ENCODE measurements at regions of chr22 and their contacts with region 1.

Region 1: DNA sequence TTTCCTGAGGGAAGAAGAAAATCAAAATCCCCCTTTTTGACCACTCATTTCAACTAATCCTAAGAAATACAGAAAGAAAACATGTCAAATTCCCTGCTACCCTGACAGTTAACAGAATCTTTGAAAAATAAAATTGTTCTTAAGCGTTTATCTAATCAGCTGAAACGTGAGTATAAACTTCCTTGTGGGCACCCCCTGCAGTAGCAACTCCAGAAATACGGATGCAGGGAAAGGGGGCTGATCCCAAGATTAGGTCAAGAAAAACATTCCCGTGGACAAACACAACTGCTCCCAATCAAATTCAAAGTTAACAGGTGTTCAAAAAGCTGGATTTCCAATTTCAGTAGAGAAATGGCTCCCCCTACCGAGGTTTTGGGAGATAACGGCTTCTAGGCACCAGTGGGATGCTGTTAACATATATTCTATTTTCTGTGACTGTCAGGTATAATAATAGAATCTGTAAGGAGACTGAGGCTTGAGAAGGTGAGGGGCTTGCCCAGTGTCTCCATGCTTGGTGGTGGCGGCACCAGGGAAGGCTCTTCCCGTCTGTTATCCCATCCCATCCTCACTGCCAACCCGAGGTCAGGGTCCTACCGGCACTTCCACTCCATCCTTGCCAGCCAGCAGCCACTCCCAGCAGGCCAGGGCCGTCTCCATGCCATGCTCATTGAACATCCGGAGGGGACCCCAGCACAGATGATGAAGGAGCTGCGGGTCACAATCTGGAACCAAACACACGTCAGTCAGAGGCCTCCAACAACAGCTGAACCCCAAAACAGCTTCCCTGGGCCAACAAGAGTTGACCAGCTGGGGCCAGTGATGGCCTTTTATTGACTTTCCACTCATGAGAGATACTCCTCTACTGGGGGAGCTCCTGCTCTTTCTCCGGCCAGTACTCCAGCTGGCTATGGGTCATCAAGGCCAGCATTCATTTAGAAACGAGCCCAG is 32.0 kb upstream of the SERPIND1 start:
- DNase-seq: peak; percentile 57
- ATAC-seq: no peak
- H3K4me3 ChIP-seq: no peak overlapping the region
- H3K4me3 Mint-ChIP-seq: no peak overlapping the region
- H3K27ac ChIP-seq: no peak overlapping the region
- H3K27ac Mint-ChIP-seq: no peak overlapping the region
- H3K4me1 ChIP-seq: peaks cover 0 to 4% of the 10 kb centered on the region in 2 donors
- H3K4me1 Mint-ChIP-seq: peaks cover 14% of the 10 kb centered on the region
- H3K27me3 ChIP-seq: no peaks in the 10 kb centered on the region
- H3K27me3 Mint-ChIP-seq: no peaks in the 10 kb centered on the region
- CTCF ChIP-seq: peak; percentile 79

Region 2: DNA sequence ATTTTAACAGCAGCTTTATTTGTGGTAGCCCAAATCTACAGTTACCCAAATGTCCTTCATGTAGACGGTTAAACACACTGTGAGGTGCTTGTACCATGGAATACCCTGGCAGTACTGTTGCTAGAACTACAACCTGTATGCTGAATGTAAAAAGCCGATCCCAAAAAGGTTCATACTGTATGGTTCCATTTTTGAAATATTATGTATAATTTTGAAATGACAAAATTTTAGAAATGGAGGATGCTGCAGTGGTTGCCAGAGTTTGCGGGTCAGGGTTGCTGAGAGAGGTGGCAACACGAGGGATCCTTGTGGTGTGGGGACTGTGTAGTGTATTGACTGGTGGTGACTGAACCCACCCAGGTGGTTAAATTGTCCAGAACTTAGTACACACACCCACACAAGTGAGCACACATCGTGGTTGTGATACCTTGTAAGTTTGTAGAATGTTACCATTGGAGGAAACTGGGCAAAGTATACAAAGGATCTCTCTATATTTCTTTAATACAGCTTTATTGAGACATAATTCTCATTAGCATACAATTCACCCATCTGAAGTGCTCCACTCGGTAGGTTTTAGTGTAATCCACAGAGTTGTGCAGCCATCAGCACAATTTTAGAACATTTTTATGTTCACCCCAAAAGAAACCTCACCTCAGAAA is 178.5 kb before region 1 on chr22:
- CTCF ChIA-PET with region 1: interaction called, 26 read pairs
- POLR2A ChIA-PET with region 1: no interaction called
- intact Hi-C with region 1: loop called (anchors 5 kb)
- DNase-seq: no peak
- ATAC-seq: no peak
- H3K4me3 ChIP-seq: no peak overlapping the region
- H3K4me3 Mint-ChIP-seq: no peak overlapping the region
- H3K27ac ChIP-seq: no peak overlapping the region
- H3K27ac Mint-ChIP-seq: no peak overlapping the region
- H3K4me1 ChIP-seq: peaks cover 0 to 3% of the 10 kb centered on the region in 2 donors
- H3K4me1 Mint-ChIP-seq: no peaks in the 10 kb centered on the region
- H3K27me3 ChIP-seq: no peaks in the 10 kb centered on the region
- H3K27me3 Mint-ChIP-seq: no peaks in the 10 kb centered on the region
- CTCF ChIP-seq: no peak

Region 3: DNA sequence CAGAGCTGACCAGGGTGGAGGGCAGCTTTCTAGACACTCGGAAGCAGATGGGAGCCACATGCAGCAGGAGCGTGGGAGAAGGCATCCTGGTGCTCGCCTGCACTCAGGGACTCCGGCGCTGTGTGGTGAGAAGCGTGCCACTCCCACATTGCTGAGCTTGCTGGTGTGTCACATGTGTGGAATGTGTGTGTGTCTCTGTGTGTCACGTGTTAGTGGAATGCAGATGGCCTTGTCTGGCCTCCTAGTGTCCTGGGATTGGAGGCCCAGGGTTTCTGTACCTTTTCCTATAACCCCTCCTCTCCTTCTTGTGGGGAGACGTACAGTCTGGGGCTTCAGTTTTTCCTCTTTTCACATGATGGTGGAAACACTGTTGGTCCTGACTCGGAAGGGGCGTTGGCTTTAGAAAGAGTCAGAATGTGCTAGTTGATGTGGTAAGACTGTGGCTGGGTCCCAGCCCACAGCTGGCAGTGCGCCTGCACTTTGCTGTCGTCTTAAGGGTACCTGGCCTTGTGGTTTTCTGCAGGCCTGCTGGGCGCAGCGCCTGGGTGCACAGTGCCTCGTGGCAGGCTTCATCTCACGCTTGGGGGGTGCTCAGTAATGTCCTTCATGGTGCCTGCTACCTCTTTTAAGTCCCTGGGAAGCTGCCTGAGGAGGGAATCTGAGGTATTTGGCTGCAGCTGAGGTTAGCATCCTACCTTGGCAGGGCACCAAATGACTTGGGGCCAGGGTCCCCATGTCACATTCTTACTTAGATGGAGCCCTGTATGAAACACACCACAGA is 172.7 kb before region 1 on chr22:
- CTCF ChIA-PET with region 1: interaction called, 26 read pairs
- POLR2A ChIA-PET with region 1: no interaction called
- intact Hi-C with region 1: loop called (anchors 5 kb)
- DNase-seq: peak; percentile 56
- ATAC-seq: peak; percentile 62
- H3K4me3 ChIP-seq: no peak overlapping the region
- H3K4me3 Mint-ChIP-seq: no peak overlapping the region
- H3K27ac ChIP-seq: peak overlapping the region in 1 of 2 donors; percentile 9
- H3K27ac Mint-ChIP-seq: peak overlapping the region; percentile 59
- H3K4me1 ChIP-seq: peaks cover 0 to 16% of the 10 kb centered on the region in 2 donors
- H3K4me1 Mint-ChIP-seq: peaks cover 6% of the 10 kb centered on the region
- H3K27me3 ChIP-seq: no peaks in the 10 kb centered on the region
- H3K27me3 Mint-ChIP-seq: no peaks in the 10 kb centered on the region
- CTCF ChIP-seq: no peak

Region 4: DNA sequence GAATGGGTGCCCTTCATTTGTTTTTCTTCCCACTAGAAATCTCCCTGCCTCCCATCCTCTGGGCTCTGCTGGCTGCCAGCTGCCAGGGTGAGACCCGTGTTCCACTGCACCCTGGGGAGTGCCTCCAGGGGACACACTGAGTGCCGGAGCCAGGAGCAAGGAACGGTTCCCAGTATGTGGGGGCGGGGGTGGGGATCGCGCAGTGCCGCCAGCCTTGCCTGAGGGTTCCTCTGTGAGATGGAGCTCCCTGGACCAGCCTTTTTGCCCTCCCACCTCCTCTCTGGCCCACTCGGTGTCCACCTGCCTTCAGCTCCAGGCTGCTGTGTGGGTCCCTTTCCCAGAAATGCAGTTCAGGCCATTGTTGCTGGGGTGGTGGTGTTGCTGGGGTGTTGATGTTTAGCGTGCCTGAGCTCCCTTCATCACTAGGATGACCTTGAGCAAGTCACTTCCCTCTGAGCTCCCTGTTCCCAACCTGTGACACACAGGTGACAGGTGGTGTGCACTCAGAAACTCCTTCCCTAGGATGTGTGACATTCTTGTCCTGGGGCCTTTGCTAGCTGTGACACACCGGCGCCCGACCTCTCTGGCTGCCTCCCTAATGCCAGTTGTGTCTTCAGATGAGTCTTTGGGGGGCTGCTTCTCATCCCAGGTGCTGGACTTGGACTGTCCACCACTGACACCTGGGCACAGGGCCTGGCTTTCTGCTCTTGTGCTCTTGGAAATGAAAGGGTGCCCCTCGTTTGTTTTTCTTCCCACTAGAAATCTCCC is 162.4 kb before region 1 on chr22:
- CTCF ChIA-PET with region 1: no interaction called
- POLR2A ChIA-PET with region 1: no interaction called
- intact Hi-C with region 1: no loop called
- DNase-seq: no peak
- ATAC-seq: no peak
- H3K4me3 ChIP-seq: no peak overlapping the region
- H3K4me3 Mint-ChIP-seq: no peak overlapping the region
- H3K27ac ChIP-seq: no peak overlapping the region
- H3K27ac Mint-ChIP-seq: no peak overlapping the region
- H3K4me1 ChIP-seq: no peaks in the 10 kb centered on the region
- H3K4me1 Mint-ChIP-seq: no peaks in the 10 kb centered on the region
- H3K27me3 ChIP-seq: no peaks in the 10 kb centered on the region
- H3K27me3 Mint-ChIP-seq: no peaks in the 10 kb centered on the region
- CTCF ChIP-seq: no peak

Region 5: GRCh38 chr22:20606041-20606783 is 135.7 kb before region 1 on chr22:
- CTCF ChIA-PET with region 1: interaction called, 20 read pairs
- POLR2A ChIA-PET with region 1: no interaction called
- intact Hi-C with region 1: no loop called
- DNase-seq: peak; percentile 73
- ATAC-seq: peak; percentile 63
- H3K4me3 ChIP-seq: no peak overlapping the region
- H3K4me3 Mint-ChIP-seq: no peak overlapping the region
- H3K27ac ChIP-seq: no peak overlapping the region
- H3K27ac Mint-ChIP-seq: no peak overlapping the region
- H3K4me1 ChIP-seq: peaks cover 0 to 4% of the 10 kb centered on the region in 2 donors
- H3K4me1 Mint-ChIP-seq: peaks cover 2% of the 10 kb centered on the region
- H3K27me3 ChIP-seq: no peaks in the 10 kb centered on the region
- H3K27me3 Mint-ChIP-seq: peaks cover 5% of the 10 kb centered on the region
- CTCF ChIP-seq: peak; percentile 72

Measured in B cell (primary cell).